Calu3 (cell line): ENCODE measurements at regions of chr18 and their contacts with region 1.

Region 1: GRCh38 chr18:59837586-59837985 is 62.2 kb upstream of the PMAIP1 start:
- DNase-seq: peak; percentile 67
- H3K4me3 Mint-ChIP-seq: no peak overlapping the region
- H3K27ac Mint-ChIP-seq: no peak overlapping the region
- H3K4me1 Mint-ChIP-seq: peaks cover 26% of the 10 kb centered on the region
- H3K27me3 Mint-ChIP-seq: no peaks in the 10 kb centered on the region
- CTCF ChIP-seq: peak; percentile 86

Region 2: GRCh38 chr18:59899298-59900221 is 62.0 kb after region 1 on chr18 and contains the start of gene PMAIP1:
- CTCF ChIA-PET with region 1: interaction called, 9 read pairs
- intact Hi-C with region 1: loop called (anchors 2 kb)
- DNase-seq: peak; percentile 92
- H3K4me3 Mint-ChIP-seq: peak within 1 kb of the TSS; percentile 92
- H3K27ac Mint-ChIP-seq: peak within 1 kb of the TSS; percentile 98
- H3K4me1 Mint-ChIP-seq: peaks cover 24% of the 10 kb centered on the region
- H3K27me3 Mint-ChIP-seq: no peaks in the 10 kb centered on the region
- CTCF ChIP-seq: no peak
- total RNA-seq, gene PMAIP1: 56.1 and 75.4 TPM in 2 replicates

Region 3: DNA sequence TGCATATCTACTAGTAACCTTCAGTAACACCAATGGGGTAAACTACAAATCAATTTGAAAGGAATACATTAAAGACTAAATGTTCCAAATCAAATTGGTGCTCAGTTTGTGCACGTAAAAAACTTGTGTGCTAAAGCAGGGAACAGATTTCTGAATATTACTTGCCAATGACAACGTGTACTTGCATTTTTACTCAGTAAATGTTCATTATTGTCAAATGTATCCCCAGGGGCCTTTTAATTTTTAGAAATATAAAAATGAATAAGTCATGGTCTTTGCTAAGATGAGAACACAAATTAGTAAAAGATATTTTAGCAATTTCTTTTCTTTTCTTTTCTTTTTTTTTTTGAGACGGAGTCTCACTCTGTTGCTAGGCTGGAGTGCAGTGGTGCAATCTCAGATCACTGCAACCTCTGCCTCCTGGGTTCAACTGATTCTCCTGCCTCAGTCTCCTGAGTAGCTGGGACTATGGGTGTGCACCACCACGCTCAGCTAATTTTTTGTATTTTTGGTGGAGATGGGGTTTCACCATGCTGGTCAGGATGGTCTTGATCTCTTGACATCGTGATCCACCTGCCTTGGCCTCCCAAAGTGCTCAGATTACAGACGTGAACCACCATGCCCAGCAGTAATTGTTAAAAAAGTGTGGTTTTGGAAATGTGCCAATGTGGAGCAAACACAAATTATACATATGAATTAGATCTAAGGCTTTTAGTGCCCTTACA is 114.9 kb after region 1 on chr18:
- CTCF ChIA-PET with region 1: interaction called, 4 read pairs
- intact Hi-C with region 1: loop called (anchors 1 kb)
- DNase-seq: no peak
- H3K4me3 Mint-ChIP-seq: peak overlapping the region; percentile 17
- H3K27ac Mint-ChIP-seq: peak overlapping the region; percentile 85
- H3K4me1 Mint-ChIP-seq: peaks cover 54% of the 10 kb centered on the region
- H3K27me3 Mint-ChIP-seq: no peaks in the 10 kb centered on the region
- CTCF ChIP-seq: no peak

Region 4: DNA sequence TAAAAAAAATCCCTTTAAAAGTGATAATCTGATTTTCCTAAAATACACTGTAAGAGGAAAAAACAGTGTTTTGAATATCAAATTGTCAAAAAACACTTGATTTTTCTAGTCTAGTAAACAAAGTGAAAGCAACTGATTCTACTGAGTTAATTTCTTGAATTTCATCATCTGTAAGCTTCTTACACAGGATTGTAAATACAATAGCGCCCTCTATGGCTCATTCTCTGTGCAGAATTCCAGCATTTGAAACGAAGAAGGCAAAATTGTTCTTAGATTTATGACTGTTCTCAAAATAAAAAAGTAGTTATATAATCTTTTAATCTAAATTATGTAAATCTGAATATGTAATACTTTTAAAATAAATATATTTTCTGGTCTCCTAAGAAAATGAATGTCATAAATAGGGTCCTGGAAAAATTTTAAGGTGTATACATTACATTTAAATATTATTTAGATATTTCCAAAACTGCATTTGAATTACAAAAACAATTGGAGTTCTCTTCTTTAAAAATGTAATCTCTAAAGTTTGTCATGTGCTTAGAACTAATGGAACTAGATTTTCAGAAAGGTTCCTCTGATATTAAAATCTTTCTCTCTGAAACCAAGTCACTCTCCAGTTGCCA is 711.9 kb after region 1 on chr18:
- CTCF ChIA-PET with region 1: no interaction called
- intact Hi-C with region 1: loop called (anchors 5 kb)
- DNase-seq: peak; percentile 30
- H3K4me3 Mint-ChIP-seq: no peak overlapping the region
- H3K27ac Mint-ChIP-seq: peak overlapping the region; percentile 28
- H3K4me1 Mint-ChIP-seq: no peaks in the 10 kb centered on the region
- H3K27me3 Mint-ChIP-seq: no peaks in the 10 kb centered on the region
- CTCF ChIP-seq: peak; percentile 68